Mammary epithelial cell (primary cell): ENCODE measurements at regions of chrX and their contacts with region 1.

Region 1: GRCh38 chrX:15761564-15762191 is 23.6 kb downstream of the CA5B start:
- DNase-seq: no peak
- H3K4me3 ChIP-seq: no peak overlapping the region
- H3K27ac ChIP-seq: no peak overlapping the region
- H3K4me1 ChIP-seq: no peaks in the 10 kb centered on the region
- H3K27me3 ChIP-seq: no peaks in the 10 kb centered on the region
- CTCF ChIP-seq: peak; percentile 70 to 81

Region 2: DNA sequence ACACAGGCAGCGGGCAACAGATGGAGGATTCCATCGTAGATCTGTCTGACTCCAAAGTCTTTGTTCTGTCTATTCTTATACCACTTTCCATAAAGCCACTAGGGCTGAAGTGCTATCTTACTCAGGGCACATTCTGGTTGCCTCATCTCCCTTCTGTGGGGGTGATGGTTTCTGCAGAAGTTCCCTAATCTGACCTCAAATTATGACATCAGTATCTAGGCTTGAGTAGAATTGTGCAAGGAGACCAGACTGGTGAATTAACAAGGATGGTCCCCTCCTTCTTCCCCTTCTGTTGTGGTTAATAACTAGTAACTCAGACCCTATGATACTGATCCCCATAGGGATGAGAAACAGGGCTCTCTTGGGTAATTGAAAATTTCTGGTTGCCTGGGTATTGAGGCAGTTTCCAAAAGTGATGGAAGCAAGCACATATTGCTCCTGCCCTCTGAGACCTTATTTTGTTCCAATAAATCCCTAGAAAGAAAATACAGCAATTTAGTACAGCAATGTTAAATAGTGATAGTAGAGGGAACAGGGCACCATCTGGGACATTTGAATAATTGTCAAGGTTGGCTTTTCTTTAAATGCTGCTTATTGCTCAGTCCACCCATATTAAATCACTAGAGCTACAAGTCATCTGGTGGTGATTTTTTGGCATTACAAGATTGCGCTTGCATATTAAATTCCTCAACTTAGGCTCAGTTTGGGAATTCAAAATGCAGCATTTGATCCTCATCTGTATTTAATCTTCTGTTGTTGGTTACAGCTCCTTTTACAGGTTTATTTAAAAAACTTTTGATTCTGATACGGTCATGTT is 150.3 kb after region 1 on chrX:
- CTCF ChIA-PET with region 1: no interaction called
- dilution Hi-C with region 1: no loop called
- in situ Hi-C with region 1: no loop called
- intact Hi-C with region 1: loop called (anchors 10 kb)
- DNase-seq: no peak
- H3K4me3 ChIP-seq: no peak overlapping the region
- H3K27ac ChIP-seq: no peak overlapping the region
- H3K4me1 ChIP-seq: no peaks in the 10 kb centered on the region
- H3K27me3 ChIP-seq: no peaks in the 10 kb centered on the region
- CTCF ChIP-seq: peak in 1 of 2 donors; percentile 18

Region 3: DNA sequence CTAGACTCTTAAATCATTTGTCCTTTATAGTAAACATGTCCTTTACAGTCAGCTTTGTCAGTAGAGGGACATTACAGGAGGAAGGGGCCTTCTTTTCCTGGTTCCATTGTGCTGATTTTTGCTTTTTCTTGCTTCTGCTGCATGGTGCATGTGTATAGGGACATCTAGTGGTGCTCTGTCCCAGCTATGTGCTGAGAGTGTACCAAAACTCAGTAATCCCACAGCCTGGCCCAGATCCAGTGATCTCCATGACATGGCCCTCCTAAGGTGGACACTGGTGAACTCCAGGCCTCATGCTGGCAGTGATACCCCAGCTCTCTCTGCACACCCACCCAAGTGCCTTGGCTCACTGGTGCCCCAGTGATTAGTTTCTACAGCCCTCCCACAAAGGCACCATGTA is 450.8 kb after region 1 on chrX:
- CTCF ChIA-PET with region 1: no interaction called
- dilution Hi-C with region 1: no loop called
- in situ Hi-C with region 1: no loop called
- intact Hi-C with region 1: loop called (anchors 2 kb)
- DNase-seq: no peak
- H3K4me3 ChIP-seq: no peak overlapping the region
- H3K27ac ChIP-seq: no peak overlapping the region
- H3K4me1 ChIP-seq: peaks cover 7% of the 10 kb centered on the region
- H3K27me3 ChIP-seq: no peaks in the 10 kb centered on the region
- CTCF ChIP-seq: peak; percentile 26 to 31

Region 4: DNA sequence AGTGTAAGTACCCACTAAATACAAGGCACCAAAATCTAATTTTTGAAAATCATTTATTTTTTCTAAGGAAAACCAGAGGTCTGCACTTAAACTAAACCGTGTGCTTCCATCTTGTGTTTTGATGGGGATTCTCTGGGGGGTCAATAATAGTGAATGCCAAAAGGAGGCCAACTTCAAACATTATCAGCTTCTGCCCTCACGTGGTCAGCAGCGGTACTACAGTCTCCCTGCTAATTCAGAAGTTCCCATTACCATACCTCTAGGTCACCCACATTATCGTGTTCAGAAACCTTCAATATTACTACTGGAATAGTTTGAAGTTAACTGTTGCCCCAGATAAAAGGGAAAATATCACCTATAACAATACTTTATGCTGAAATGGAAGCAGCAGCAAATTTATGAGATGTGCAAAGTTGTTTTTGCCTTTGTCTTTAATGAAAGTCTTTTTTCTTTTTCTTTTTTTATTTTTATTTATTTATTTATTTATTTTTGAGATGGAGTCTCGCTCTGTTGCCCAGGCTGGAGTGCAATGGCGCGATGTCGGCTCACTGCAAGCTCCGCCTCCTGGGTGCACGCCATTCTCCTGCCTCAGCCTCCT is 933.5 kb after region 1 on chrX:
- CTCF ChIA-PET with region 1: no interaction called
- dilution Hi-C with region 1: no loop called
- in situ Hi-C with region 1: no loop called
- intact Hi-C with region 1: loop called (anchors 10 kb)
- DNase-seq: peak; percentile 32
- H3K4me3 ChIP-seq: no peak overlapping the region
- H3K27ac ChIP-seq: no peak overlapping the region
- H3K4me1 ChIP-seq: no peaks in the 10 kb centered on the region
- H3K27me3 ChIP-seq: no peaks in the 10 kb centered on the region
- CTCF ChIP-seq: peak; percentile 93 to 97